ENCODE measurements at regions of chr19 and their contacts with region 1.

Region 1: GRCh38 chr19:55549500-55550320 is 4.4 kb upstream of the SBK3 start:
- DNase-seq: peak; percentile 70
- ATAC-seq: peak; percentile 81
- H3K4me3 Mint-ChIP-seq: peak overlapping the region; percentile 76
- H3K27ac Mint-ChIP-seq: peak overlapping the region; percentile 90
- H3K4me1 Mint-ChIP-seq: peaks cover 52% of the 10 kb centered on the region
- H3K27me3 Mint-ChIP-seq: peaks cover 9% of the 10 kb centered on the region
- CTCF ChIP-seq: no peak

Region 2: GRCh38 chr19:55491546-55492360 is 58.0 kb before region 1 on chr19:
- CTCF ChIA-PET with region 1: no interaction called
- POLR2A ChIA-PET with region 1: interaction called, 13 read pairs
- DNase-seq: no peak
- ATAC-seq: no peak
- H3K4me3 Mint-ChIP-seq: no peak overlapping the region
- H3K27ac Mint-ChIP-seq: no peak overlapping the region
- H3K4me1 Mint-ChIP-seq: peaks cover 14% of the 10 kb centered on the region
- H3K27me3 Mint-ChIP-seq: peaks cover 3% of the 10 kb centered on the region
- CTCF ChIP-seq: no peak